ENCODE measurements at regions of chr4 and their contacts with region 1.

Region 1: DNA sequence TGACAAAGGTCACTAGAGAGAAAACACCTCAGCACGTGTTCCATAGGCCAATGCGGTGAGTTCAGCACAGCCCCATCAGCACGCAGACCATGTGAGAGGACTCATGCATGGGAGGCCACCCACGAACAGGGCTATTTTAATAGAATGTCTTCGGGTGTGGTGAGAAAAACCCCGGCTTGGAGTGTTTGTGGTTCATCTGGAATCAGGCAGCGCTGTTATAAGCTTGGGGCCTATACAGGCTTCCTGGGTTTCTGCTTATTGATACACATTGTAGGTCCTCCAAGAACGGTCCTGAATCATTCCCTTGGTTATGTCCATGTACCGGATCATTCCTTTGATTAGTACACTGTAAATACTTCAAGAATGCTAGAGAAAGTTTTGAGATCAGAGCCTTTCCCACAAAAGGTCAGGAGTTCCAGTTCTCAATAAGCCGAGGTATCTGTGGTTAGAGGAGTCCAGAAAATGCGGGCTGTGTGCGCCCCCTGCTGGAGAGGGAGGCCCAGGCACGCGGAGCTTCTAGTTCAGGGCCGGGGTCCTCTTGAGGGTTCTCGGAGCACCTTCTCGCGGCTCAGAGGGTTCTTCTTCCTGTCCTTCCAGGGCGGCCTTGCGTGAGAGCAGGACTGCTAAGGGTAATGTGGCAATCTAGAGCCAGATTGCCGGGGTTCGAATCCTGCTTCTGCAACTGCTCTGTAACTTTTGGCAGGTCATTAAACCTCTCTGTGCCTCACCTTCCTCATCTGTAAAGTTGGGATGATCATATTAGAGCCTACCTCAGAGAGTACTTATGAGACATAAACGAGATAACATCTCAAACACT is 51.8 kb downstream of the TLR10 start:
- DNase-seq: peak; percentile 82
- H3K4me3 ChIP-seq: no peak overlapping the region; a peak in 1 of 4 replicates
- H3K27ac ChIP-seq: no peak overlapping the region
- H3K4me1 ChIP-seq: no peaks in the 10 kb centered on the region
- H3K27me3 ChIP-seq: no peaks in the 10 kb centered on the region
- CTCF ChIP-seq: peak; percentile 98
- EP300 ChIP-seq: no peak
- RAD21 ChIP-seq: peak; percentile 94

Region 2: GRCh38 chr4:38062088-38062893 is 668.7 kb before region 1 on chr4:
- CTCF ChIA-PET with region 1: interaction called, 24 read pairs
- POLR2A ChIA-PET with region 1: no interaction called
- DNase-seq: peak; percentile 71
- H3K4me3 ChIP-seq: peak overlapping the region; percentile 17 to 49; a peak in 2 of 4 replicates
- H3K27ac ChIP-seq: peak overlapping the region; percentile 78 to 89; a peak in 3 of 4 replicates
- H3K4me1 ChIP-seq: peaks cover 11 to 35% of the 10 kb centered on the region in 2 experiments; a peak in 3 of 4 replicates
- H3K27me3 ChIP-seq: no peaks in the 10 kb centered on the region
- CTCF ChIP-seq: peak; percentile 87
- EP300 ChIP-seq: no peak
- RAD21 ChIP-seq: peak; percentile 91

Region 3: GRCh38 chr4:38319456-38320342 is 411.3 kb before region 1 on chr4:
- CTCF ChIA-PET with region 1: interaction called, 19 read pairs
- POLR2A ChIA-PET with region 1: no interaction called
- DNase-seq: peak; percentile 94
- H3K4me3 ChIP-seq: no peak overlapping the region; a peak in 1 of 4 replicates
- H3K27ac ChIP-seq: peak overlapping the region in 1 of 2 experiments; percentile 89; a peak in 2 of 4 replicates
- H3K4me1 ChIP-seq: peaks cover 0 to 7% of the 10 kb centered on the region in 2 experiments; a peak in 1 of 4 replicates
- H3K27me3 ChIP-seq: no peaks in the 10 kb centered on the region
- CTCF ChIP-seq: peak; percentile 94
- EP300 ChIP-seq: peak in 1 of 2 experiments; percentile 58; a peak in 2 of 4 replicates
- RAD21 ChIP-seq: peak; percentile 94

Region 4: GRCh38 chr4:38691251-38692008 is 39.6 kb before region 1 on chr4:
- CTCF ChIA-PET with region 1: interaction called, 18 read pairs
- POLR2A ChIA-PET with region 1: no interaction called
- DNase-seq: no peak
- H3K4me3 ChIP-seq: no peak overlapping the region
- H3K27ac ChIP-seq: no peak overlapping the region
- H3K4me1 ChIP-seq: peaks cover 3 to 13% of the 10 kb centered on the region in 2 experiments; a peak in 3 of 4 replicates
- H3K27me3 ChIP-seq: no peaks in the 10 kb centered on the region
- CTCF ChIP-seq: no peak
- EP300 ChIP-seq: no peak
- RAD21 ChIP-seq: no peak

Region 5: DNA sequence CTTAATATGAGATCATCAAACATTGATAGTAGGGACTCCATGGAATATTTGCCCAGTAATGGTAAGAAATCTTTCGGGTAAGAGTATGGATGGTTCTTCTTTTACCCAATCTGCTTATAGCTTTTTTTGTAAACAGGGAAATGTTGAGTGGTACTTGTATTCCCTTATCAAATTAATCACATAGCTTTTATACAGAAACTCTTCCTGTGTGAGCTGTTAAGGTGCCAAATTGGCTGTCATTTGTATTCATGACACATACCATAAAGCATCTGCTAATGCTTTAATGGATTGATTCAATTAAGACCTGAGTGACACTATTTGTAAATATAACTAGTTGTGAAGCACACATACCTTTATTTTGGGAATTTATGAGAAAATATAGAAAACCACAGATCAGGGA is 32.9 kb before region 1 on chr4:
- CTCF ChIA-PET with region 1: interaction called, 18 read pairs
- POLR2A ChIA-PET with region 1: no interaction called
- DNase-seq: no peak
- H3K4me3 ChIP-seq: no peak overlapping the region
- H3K27ac ChIP-seq: no peak overlapping the region; a peak in 1 of 4 replicates
- H3K4me1 ChIP-seq: peaks cover 0 to 8% of the 10 kb centered on the region in 2 experiments; a peak in 2 of 4 replicates
- H3K27me3 ChIP-seq: no peaks in the 10 kb centered on the region
- CTCF ChIP-seq: no peak
- EP300 ChIP-seq: no peak
- RAD21 ChIP-seq: no peak

Region 6: GRCh38 chr4:38717604-38718003 is 13.4 kb before region 1 on chr4:
- CTCF ChIA-PET with region 1: interaction called, 15 read pairs
- POLR2A ChIA-PET with region 1: no interaction called
- DNase-seq: no peak
- H3K4me3 ChIP-seq: no peak overlapping the region
- H3K27ac ChIP-seq: no peak overlapping the region
- H3K4me1 ChIP-seq: peaks cover 0 to 3% of the 10 kb centered on the region in 2 experiments; a peak in 1 of 4 replicates
- H3K27me3 ChIP-seq: no peaks in the 10 kb centered on the region
- CTCF ChIP-seq: no peak
- EP300 ChIP-seq: no peak
- RAD21 ChIP-seq: no peak

Region 7: GRCh38 chr4:38743866-38744265 is 12.8 kb after region 1 on chr4:
- CTCF ChIA-PET with region 1: interaction called, 45 read pairs
- POLR2A ChIA-PET with region 1: no interaction called
- DNase-seq: no peak
- H3K4me3 ChIP-seq: no peak overlapping the region
- H3K27ac ChIP-seq: no peak overlapping the region
- H3K4me1 ChIP-seq: no peaks in the 10 kb centered on the region
- H3K27me3 ChIP-seq: no peaks in the 10 kb centered on the region
- CTCF ChIP-seq: no peak
- EP300 ChIP-seq: no peak
- RAD21 ChIP-seq: no peak

Region 8: GRCh38 chr4:39124885-39125599 is 394.0 kb after region 1 on chr4:
- CTCF ChIA-PET with region 1: no interaction called
- POLR2A ChIA-PET with region 1: no interaction called
- DNase-seq: no peak
- H3K4me3 ChIP-seq: no peak overlapping the region
- H3K27ac ChIP-seq: no peak overlapping the region
- H3K4me1 ChIP-seq: no peaks in the 10 kb centered on the region
- H3K27me3 ChIP-seq: no peaks in the 10 kb centered on the region
- CTCF ChIP-seq: no peak
- EP300 ChIP-seq: no peak
- RAD21 ChIP-seq: no peak